OCI-LY7 (cell line): ENCODE measurements at regions of chr20 and their contacts with region 1.

Region 1: GRCh38 chr20:36709126-36709525 is 36.8 kb downstream of the NDRG3 start:
- DNase-seq: no peak
- H3K4me3 ChIP-seq: no peak overlapping the region
- H3K27ac ChIP-seq: no peak overlapping the region
- H3K4me1 ChIP-seq: no peaks in the 10 kb centered on the region
- CTCF ChIP-seq: no peak

Region 2: GRCh38 chr20:36573103-36573794 is 135.9 kb before region 1 on chr20 and contains the start of gene TGIF2:
- CTCF ChIA-PET with region 1: no interaction called
- POLR2A ChIA-PET with region 1: no interaction called
- intact Hi-C with region 1: no loop called
- DNase-seq: peak; percentile 95
- H3K4me3 ChIP-seq: peak within 1 kb of the TSS; percentile 88
- H3K27ac ChIP-seq: peak within 1 kb of the TSS; percentile 69
- H3K4me1 ChIP-seq: peaks cover 25% of the 10 kb centered on the region
- CTCF ChIP-seq: no peak
- total RNA-seq, gene TGIF2: 26.6 and 41.3 TPM in 2 replicates

Region 3: GRCh38 chr20:36728986-36729385 is 19.9 kb after region 1 on chr20:
- CTCF ChIA-PET with region 1: no interaction called
- POLR2A ChIA-PET with region 1: interaction called, 10 read pairs
- intact Hi-C with region 1: no loop called
- DNase-seq: peak; percentile 25
- H3K4me3 ChIP-seq: no peak overlapping the region
- H3K27ac ChIP-seq: no peak overlapping the region
- H3K4me1 ChIP-seq: no peaks in the 10 kb centered on the region
- CTCF ChIP-seq: peak; percentile 58

Region 4: DNA sequence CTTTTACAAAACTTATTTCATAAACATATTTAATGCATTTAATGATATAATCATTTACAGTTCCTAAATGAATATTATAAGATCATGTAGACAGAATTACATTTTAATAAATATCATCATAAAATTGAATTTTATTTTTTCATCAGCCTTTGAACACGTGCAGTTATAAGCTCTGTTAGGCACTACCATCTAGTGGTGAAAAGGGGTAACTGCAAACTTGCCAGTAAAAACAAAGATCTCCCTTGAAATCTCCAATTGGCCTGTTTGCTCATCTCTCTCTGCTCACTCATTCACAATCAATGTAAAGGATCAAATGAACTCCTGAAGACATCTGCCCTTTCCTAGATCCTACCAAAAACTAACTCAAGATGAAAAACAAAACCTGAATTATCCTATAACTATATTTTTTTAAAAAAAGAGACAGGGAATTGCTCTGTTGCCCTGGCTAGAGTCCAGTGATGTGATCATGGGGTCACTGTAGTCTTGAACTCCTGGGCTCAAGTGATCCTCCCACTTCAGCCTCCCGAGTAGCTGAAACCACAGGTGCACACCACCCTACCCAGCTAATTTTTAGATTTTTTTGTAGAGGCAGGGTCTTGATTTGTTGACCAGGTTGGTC is 210.7 kb after region 1 on chr20:
- CTCF ChIA-PET with region 1: no interaction called
- POLR2A ChIA-PET with region 1: no interaction called
- intact Hi-C with region 1: no loop called
- DNase-seq: peak; percentile 70
- H3K4me3 ChIP-seq: no peak overlapping the region
- H3K27ac ChIP-seq: no peak overlapping the region
- H3K4me1 ChIP-seq: no peaks in the 10 kb centered on the region
- CTCF ChIP-seq: peak; percentile 99